Spleen (tissue), 13 donors: ENCODE measurements at regions of chr17 and their contacts with region 1.

Region 1: DNA sequence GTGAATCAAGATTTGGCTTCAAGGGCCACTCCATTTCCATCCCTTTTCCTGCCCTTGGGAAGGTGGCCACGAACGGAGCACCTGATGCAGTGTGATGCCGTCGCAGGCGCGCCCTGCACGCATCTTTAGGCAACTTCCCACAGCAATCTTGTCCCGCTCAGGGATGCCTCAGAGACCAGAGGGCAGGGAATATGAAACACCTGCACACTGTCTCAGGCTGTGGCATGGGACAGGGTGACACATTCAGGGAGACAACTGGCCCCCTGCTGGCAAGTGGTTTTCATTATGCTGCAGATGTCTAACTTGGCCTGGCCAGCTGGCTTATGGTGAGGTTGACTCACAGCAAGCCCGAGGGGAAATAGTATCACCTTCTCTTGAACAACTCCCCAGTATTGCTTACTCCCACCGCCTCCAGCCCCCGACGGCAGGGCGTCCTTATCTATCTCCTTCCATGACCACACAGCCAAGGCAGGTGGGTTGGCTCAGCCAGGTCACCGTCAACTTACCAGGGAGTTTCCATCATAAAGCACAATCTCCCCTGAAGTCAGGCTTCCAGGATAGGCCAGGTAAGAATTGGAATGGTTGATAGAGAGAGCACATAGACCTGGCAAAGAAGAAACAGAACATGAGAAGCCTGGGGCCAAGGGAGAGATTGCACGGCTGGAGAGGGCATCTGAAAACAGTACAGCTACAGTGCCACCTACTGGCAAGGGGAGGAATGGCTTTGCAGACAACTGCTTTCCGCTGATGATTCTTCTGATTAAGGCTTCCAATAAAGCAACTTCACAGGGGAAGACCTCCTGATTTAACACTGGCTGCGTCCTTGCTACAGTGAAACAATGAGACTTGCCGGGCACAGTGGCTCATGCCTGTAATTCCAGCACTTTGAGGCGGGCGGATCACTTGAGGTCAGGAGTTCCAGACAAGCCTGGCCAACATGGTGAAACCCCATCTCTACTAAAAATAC is 21.1 kb downstream of the WIPI1 start:
- DNase-seq: peak; percentile 87
- H3K4me3 ChIP-seq: no peak overlapping the region
- H3K27ac ChIP-seq: peak overlapping the region in 4 of 8 donors; percentile 79 to 89 (median 88)
- H3K4me1 ChIP-seq: peaks cover 16 to 61% (median 51%) of the 10 kb centered on the region in 6 donors
- H3K27me3 ChIP-seq: no peaks in the 10 kb centered on the region
- CTCF ChIP-seq: peak; percentile 89 to 97 (median 94)
- POLR2A ChIP-seq: no peak

Region 2: DNA sequence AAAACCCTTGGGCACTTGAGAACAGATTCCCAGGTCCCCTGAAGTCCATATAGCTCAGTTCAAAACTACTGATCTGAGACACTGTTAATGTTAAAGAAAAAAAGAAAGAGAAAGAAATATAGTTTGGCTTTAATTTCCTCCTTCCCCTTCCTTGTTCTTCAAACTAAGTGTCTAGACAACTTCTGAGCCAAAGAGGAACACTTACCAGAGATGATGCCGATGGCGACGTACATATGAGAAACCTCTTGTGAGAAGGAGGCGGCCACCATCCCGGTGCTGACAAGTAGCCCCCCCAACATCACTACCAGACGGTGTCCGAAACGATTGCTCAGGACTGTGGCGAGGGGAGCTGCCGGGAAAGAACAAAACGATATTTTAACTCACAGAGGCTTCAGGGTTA is 162.4 kb before region 1 on chr17:
- intact Hi-C with region 1: loop called (anchors 10 kb)
- DNase-seq: no peak
- H3K4me3 ChIP-seq: no peak overlapping the region
- H3K27ac ChIP-seq: peak overlapping the region in 2 of 8 donors; percentile 1 to 26
- H3K4me1 ChIP-seq: no peaks in the 10 kb centered on the region
- H3K27me3 ChIP-seq: no peaks in the 10 kb centered on the region
- CTCF ChIP-seq: no peak
- POLR2A ChIP-seq: no peak

Region 3: GRCh38 chr17:68314916-68315535 is 121.1 kb before region 1 on chr17:
- intact Hi-C with region 1: no loop called
- DNase-seq: no peak
- H3K4me3 ChIP-seq: peak overlapping the region in 1 of 8 donors; percentile 34
- H3K27ac ChIP-seq: peak overlapping the region in 7 of 8 donors; percentile 66 to 94 (median 88)
- H3K4me1 ChIP-seq: peaks cover 14 to 98% (median 38%) of the 10 kb centered on the region in 6 donors
- H3K27me3 ChIP-seq: no peaks in the 10 kb centered on the region
- CTCF ChIP-seq: no peak
- POLR2A ChIP-seq: no peak

Region 4: DNA sequence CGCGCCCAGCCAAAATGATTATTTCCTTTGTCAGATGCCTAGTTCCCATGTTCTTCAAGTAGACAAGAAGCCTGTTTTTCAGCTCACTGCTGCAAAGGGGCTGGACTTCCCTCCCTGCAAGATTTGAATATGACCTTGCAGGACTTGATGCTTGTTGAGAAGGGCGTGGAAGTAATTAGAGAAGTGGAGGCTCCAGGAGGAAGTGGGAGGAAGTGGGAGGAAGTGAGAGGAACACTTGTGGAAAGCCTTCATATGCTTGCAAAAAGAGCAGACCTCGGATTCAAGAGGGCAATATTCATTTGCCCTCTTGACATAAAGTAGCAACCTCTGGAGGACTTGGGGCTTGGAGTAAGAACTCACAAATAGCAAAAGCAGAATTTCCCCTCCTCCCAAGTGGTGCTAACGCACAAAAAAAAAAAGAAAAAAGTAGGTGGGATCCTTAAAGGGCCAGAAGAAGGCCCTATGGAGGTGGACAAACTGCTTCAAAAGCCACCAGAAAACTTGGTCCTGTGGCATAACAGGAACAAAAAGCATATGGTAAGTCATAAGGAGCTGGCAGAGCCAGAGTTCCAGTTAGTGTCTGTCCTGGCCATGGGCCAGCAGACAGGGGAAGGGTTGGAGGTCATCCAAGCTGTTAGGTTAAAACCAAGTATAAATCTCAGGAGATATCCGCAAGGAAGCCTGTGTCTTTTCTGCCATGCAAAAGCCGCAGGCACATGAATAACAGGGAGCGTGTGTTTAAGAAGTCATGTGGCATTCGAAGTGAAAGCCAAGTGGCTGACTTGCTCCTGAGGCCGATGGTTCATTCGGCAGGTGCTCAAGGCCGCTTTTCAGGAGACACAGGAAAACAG is 55.4 kb after region 1 on chr17:
- intact Hi-C with region 1: no loop called
- DNase-seq: no peak
- H3K4me3 ChIP-seq: peak overlapping the region in 1 of 8 donors; percentile 25
- H3K27ac ChIP-seq: peak overlapping the region in 7 of 8 donors; percentile 53 to 86 (median 68)
- H3K4me1 ChIP-seq: peaks cover 6 to 65% (median 50%) of the 10 kb centered on the region in 6 donors
- H3K27me3 ChIP-seq: no peaks in the 10 kb centered on the region
- CTCF ChIP-seq: no peak
- POLR2A ChIP-seq: no peak